GM12878 (cell line): ENCODE measurements at regions of chr5 and their contacts with region 1.

Region 1: DNA sequence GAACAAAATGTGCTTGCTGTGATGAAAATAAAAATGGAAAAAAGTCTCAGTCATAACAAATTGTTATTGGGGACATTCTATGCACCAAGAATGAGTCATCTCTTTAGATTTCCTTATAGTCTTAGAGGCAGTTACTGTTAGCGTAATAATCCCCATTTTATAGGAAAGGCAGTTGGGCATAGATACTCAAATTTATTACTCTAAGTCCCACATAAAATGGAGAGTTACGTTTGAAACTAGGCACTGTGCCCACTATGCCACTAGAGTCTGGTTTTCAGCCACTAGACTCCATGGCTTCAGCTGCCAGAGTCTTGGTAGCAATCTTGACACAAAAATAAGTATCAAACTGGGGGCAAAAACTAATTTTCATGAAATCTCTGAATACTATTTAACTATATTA is 317.9 kb upstream of the MEF2C start:
- DNase-seq: no peak
- ATAC-seq: no peak
- H3K4me3 ChIP-seq: no peak overlapping the region
- H3K27ac ChIP-seq: no peak overlapping the region
- H3K4me1 ChIP-seq: no peaks in the 10 kb centered on the region
- H3K27me3 ChIP-seq: no peaks in the 10 kb centered on the region
- CTCF ChIP-seq: no peak
- EP300 ChIP-seq: no peak
- POLR2A ChIP-seq: no peak
- RAD21 ChIP-seq: no peak

Region 2: GRCh38 chr5:88845081-88845697 is 355.7 kb before region 1 on chr5:
- CTCF ChIA-PET with region 1: no interaction called
- POLR2A ChIA-PET with region 1: no interaction called
- RAD21 ChIA-PET with region 1: no interaction called
- SMC1A ChIA-PET with region 1: no interaction called
- in situ Hi-C with region 1: no loop called
- intact Hi-C with region 1: no loop called
- DNase-seq: peak; percentile 73
- ATAC-seq: peak; percentile 82
- H3K4me3 ChIP-seq: no peak overlapping the region
- H3K27ac ChIP-seq: peak overlapping the region; percentile 56
- H3K4me1 ChIP-seq: peaks cover 3% of the 10 kb centered on the region; the same call in 1 of the 2 replicates
- H3K27me3 ChIP-seq: no peaks in the 10 kb centered on the region
- CTCF ChIP-seq: no peak
- EP300 ChIP-seq: peak; percentile 77 to 98
- POLR2A ChIP-seq: no peak
- RAD21 ChIP-seq: no peak

Region 3: DNA sequence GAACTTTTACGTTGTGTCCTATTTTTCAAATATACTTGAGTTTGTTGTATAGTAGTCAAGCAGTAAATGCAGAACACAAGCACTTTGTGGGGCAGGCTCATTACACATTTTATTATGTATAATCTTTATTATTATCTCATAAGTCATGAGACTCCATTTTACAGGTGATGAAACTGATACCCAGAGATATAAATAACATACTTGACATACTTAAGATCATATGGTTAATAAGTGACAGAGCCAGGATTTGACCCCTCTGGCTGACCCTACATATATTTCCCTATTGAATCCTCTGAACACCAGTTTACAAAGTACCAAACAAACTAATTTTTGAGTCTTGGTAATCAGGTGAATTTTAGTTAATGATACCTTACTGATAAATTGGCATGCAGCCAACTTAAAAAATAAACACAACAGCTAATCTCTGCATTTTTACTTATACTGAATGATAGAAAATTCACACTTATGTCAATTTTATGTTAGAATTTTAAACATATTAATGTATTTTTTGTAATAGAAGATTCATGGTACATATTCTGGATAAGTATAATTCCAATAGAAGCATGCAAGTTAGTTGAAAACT is 12.9 kb before region 1 on chr5:
- CTCF ChIA-PET with region 1: interaction called, 5 read pairs
- POLR2A ChIA-PET with region 1: no interaction called
- RAD21 ChIA-PET with region 1: interaction called, 3 read pairs
- SMC1A ChIA-PET with region 1: interaction called, 26 read pairs
- in situ Hi-C with region 1: no loop called
- intact Hi-C with region 1: no loop called
- DNase-seq: no peak
- ATAC-seq: peak; percentile 80
- H3K4me3 ChIP-seq: no peak overlapping the region
- H3K27ac ChIP-seq: no peak overlapping the region
- H3K4me1 ChIP-seq: no peaks in the 10 kb centered on the region
- H3K27me3 ChIP-seq: no peaks in the 10 kb centered on the region
- CTCF ChIP-seq: no peak
- EP300 ChIP-seq: peak in 1 of 2 experiments; percentile 25; a peak in 1 of 4 replicates
- POLR2A ChIP-seq: no peak
- RAD21 ChIP-seq: no peak